Activated CD4-positive, alpha-beta memory T cell treated with anti-CD3 and anti-CD28 coated beads for 36 hours (primary cell): ENCODE measurements at regions of chrX and their contacts with region 1.

Region 1: GRCh38 chrX:85544609-85545008 is 165.1 kb upstream of the POF1B start:
- DNase-seq: no peak
- H3K4me3 Mint-ChIP-seq: no peak overlapping the region
- H3K27ac Mint-ChIP-seq: no peak overlapping the region
- H3K4me1 Mint-ChIP-seq: no peaks in the 10 kb centered on the region
- H3K27me3 Mint-ChIP-seq: no peaks in the 10 kb centered on the region

Region 2: DNA sequence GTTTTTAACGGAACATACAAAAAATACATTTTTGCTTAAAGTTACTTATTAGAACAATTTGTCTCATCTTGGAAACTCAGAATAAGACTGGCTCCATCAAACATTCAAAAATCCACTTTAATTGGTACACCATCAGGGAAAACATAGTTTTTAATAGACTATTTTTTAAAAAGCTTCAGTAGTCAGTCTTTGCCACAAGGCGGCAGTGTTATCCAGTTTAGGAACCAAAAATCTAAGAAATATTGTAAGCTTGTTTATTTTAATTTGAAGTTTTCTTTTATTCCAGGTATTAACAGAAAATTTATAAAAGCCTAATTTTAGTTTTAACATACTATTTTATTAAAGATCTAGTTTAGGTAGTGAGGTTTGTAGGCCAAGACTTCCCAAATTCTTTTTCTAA is 433.3 kb before region 1 on chrX:
- CTCF ChIA-PET with region 1: no interaction called
- POLR2A ChIA-PET with region 1: no interaction called
- intact Hi-C with region 1: loop called (anchors 1 kb)
- DNase-seq: no peak
- H3K4me3 Mint-ChIP-seq: no peak overlapping the region
- H3K27ac Mint-ChIP-seq: no peak overlapping the region
- H3K4me1 Mint-ChIP-seq: no peaks in the 10 kb centered on the region
- H3K27me3 Mint-ChIP-seq: peaks cover 1% of the 10 kb centered on the region

Region 3: GRCh38 chrX:85274333-85274732 is 270.3 kb before region 1 on chrX:
- CTCF ChIA-PET with region 1: no interaction called
- POLR2A ChIA-PET with region 1: no interaction called
- intact Hi-C with region 1: no loop called
- DNase-seq: no peak
- H3K4me3 Mint-ChIP-seq: no peak overlapping the region
- H3K27ac Mint-ChIP-seq: no peak overlapping the region
- H3K4me1 Mint-ChIP-seq: no peaks in the 10 kb centered on the region
- H3K27me3 Mint-ChIP-seq: no peaks in the 10 kb centered on the region